ENCODE measurements at regions of chr13 and their contacts with region 1.

Region 1: DNA sequence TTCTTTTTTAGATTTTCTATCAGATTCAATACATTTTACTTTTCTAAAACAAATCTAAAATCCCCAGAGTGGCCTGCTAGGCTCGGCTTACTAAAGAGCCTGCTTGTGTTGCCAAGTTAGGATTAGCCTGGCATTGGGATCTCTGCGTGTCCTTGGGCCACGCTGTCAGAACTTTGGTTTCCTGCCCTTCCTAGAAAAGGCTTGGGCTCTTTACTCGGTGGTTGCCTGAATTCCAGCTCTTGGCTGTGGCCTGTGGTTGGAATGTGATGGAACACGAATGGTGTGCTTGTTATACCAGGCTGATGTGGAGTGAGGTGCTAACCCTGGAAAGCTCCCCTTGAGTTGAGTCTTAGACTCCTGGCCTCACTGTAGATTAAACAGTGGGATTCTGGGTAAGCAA is 8.5 kb downstream of the SPATA13 start:
- DNase-seq: no peak

Region 2: DNA sequence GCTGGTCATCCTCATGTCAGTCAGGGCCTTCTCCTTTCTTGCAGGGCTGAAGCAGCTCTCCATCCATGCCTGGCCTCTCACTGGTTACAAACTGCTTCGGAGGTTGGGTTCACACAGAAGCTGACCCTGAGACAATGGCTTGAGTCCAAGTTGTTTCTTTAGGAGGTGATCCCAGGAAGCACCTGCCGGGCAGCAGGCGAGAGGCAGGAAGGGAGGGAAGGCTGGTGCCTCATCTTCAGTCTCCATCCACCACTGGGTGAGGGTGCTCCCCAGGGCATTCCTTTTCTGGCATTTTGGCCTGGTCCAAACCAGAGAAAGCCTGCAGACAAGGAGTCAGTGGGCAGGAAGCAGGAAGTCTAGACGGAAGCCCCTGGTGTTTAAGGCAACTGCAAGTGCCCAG is 26.1 kb before region 1 on chr13:
- intact Hi-C with region 1: loop called in 1 of 2 experiments (anchors 1 kb)
- DNase-seq: no peak

Measured in posterior vena cava (tissue), 2 donors.